Lower lobe of right lung (tissue), 2 donors: ENCODE measurements at regions of chr4 and their contacts with region 1.

Region 1: DNA sequence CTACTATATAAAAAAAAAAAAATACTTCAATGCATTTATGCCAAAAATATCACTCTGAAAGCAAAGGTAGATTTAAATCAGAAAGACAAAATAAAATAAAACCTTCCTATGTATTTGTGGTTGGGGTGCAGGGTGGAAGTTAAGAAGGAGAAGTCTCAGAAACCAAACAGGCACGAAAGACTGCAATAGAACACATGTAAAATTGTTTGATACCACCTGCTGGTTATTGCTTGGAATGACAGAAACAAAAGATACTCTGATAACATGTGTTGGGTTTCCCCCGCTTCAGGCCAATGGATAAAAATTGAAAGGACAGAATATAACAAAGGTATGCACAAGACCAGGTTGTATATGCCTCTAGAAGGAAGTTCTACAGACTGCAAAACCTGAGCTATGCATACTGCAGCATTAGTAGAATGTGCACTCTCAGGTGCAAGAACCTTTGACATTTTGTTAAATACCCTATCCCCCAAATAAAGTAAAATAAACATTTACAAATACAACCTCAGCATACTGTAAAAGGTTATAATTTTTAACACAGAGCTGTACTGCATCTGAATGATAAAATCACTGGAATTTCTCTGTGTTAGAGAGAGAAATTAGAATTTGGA is 118.8 kb downstream of the GABRA2 start:
- DNase-seq: no peak
- ATAC-seq: no peak
- H3K4me3 ChIP-seq: no peak overlapping the region
- H3K27ac ChIP-seq: no peak overlapping the region
- H3K4me1 ChIP-seq: no peaks in the 10 kb centered on the region
- H3K27me3 ChIP-seq: no peaks in the 10 kb centered on the region
- CTCF ChIP-seq: peak; percentile 38

Region 2: GRCh38 chr4:44927399-44928380 is 1343.4 kb before region 1 on chr4:
- intact Hi-C with region 1: loop called (anchors 5 kb)
- DNase-seq: no peak
- ATAC-seq: no peak
- H3K4me3 ChIP-seq: no peak overlapping the region
- H3K27ac ChIP-seq: no peak overlapping the region
- H3K4me1 ChIP-seq: no peaks in the 10 kb centered on the region
- H3K27me3 ChIP-seq: no peaks in the 10 kb centered on the region
- CTCF ChIP-seq: peak; percentile 35